ENCODE measurements at regions of chr15 and their contacts with region 1.

Region 1: DNA sequence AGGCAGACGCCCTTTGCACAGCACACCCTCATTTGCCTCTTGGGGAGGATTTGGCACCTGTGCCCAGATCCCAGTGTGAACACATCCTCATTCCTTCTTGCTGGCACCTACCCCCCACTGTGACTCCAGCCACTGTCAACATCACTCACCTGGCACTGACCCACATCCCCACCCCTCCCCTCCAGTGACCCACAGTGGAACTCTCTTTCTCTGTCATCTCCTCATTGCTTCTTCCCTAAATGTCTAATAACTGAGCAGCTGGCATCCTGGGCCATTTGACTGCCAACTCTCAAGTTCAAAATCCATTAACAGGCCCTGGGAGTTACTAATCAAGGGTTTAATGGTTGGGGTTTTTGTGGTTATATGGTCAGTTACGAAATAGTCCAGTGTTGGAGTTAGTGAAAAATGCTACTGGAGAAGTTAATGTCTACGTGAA is 14.4 kb downstream of the SNAPC5 start:
- DNase-seq: peak; percentile 89 to 94
- H3K4me3 ChIP-seq: no peak overlapping the region
- H3K27ac ChIP-seq: peak overlapping the region; percentile 72
- H3K4me1 ChIP-seq: peaks cover 47% of the 10 kb centered on the region
- H3K27me3 ChIP-seq: no peaks in the 10 kb centered on the region
- CTCF ChIP-seq: no peak

Region 2: DNA sequence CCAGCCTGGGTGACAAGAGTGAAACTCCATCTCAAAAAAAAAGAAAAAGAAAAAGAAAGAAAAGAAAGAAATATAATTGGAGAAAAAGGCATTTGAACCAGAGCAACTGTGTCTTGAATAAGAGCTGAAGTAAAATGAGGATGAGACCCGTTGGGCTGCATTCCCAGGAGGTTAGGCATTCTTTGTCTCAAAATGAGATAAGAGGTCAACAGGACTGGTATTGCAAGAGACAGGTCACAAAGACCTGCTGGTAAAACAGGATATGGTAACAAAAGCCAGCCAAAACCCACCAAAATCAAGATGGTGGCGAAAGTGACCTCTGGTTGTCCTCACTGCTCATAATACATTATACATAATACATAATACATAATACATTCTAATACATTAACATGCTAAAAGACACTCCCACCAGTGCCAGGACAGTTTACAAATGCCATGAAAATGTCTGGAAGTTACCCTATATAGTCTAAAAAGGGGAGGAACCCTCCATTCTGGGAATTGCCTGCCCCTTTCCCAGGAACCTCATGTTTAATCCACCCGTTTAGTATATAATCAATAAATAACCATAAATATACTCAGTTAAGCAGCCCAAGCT is 118.1 kb before region 1 on chr15:
- CTCF ChIA-PET with region 1: no interaction called
- POLR2A ChIA-PET with region 1: interaction called, 4 read pairs
- intact Hi-C with region 1: loop called (anchors 2 kb)
- DNase-seq: peak; percentile 57 to 71
- H3K4me3 ChIP-seq: no peak overlapping the region
- H3K27ac ChIP-seq: peak overlapping the region; percentile 61; the same call in 1 of the 2 replicates
- H3K4me1 ChIP-seq: peaks cover 29% of the 10 kb centered on the region
- H3K27me3 ChIP-seq: no peaks in the 10 kb centered on the region
- CTCF ChIP-seq: no peak

Region 3: DNA sequence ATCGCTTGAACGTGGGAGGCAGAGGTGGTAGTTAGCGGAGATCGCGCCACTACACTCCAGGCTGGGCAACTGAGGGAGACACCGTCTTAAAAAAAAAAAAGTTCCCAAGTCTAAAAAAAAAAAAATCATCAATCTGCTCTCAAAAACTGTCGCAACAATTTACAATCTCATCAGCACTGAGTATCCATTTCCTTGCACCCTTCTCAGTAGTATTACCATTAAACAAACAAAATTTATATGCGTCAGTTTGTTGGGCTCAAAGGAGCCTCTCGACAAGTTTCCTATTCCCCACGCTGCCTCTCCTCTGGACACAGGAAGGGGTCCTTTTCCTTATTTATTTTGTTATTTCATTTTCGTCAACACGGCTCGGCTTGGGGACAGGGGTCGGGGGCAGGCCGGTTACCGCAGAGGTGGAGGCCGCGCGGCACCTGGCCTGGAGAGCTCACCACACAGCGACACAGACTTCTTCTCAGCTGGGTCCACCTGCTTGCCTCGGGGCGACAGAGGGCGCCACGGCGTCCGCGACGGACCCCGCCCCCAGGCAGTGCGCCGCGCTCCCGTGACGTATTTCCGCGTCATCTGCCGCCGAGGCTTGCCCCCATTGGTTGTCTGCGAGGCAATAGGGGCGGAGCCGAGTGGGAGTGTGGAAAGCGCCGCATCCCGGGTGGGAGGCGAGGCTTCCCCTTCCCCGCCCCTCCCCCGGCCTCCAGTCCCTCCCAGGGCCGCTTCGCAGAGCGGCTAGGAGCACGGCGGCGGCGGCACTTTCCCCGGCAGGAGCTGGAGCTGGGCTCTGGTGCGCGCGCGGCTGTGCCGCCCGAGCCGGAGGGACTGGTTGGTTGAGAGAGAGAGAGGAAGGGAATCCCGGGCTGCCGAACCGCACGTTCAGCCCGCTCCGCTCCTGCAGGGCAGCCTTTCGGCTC is 96.7 kb before region 1 on chr15 and contains the start of gene MAP2K1:
- CTCF ChIA-PET with region 1: no interaction called
- POLR2A ChIA-PET with region 1: no interaction called
- intact Hi-C with region 1: loop called (anchors 1 kb)
- DNase-seq: peak; percentile 82 to 98
- H3K4me3 ChIP-seq: peak within 1 kb of the TSS; percentile 62
- H3K27ac ChIP-seq: peak within 1 kb of the TSS; percentile 55
- H3K4me1 ChIP-seq: peaks cover 19% of the 10 kb centered on the region
- H3K27me3 ChIP-seq: no peaks in the 10 kb centered on the region
- CTCF ChIP-seq: no peak; the same call in 1 of the 2 replicates
- total RNA-seq, gene MAP2K1: 78.6 and 95.5 TPM in 2 replicates

Region 4: GRCh38 chr15:66452971-66453580 is 30.1 kb before region 1 on chr15:
- CTCF ChIA-PET with region 1: interaction called, 19 read pairs
- POLR2A ChIA-PET with region 1: no interaction called
- intact Hi-C with region 1: no loop called
- DNase-seq: no peak
- H3K4me3 ChIP-seq: no peak overlapping the region
- H3K27ac ChIP-seq: no peak overlapping the region
- H3K4me1 ChIP-seq: peaks cover 34% of the 10 kb centered on the region
- H3K27me3 ChIP-seq: no peaks in the 10 kb centered on the region
- CTCF ChIP-seq: no peak

Region 5: GRCh38 chr15:66459818-66460615 is 23.1 kb before region 1 on chr15:
- CTCF ChIA-PET with region 1: no interaction called
- POLR2A ChIA-PET with region 1: interaction called, 5 read pairs
- intact Hi-C with region 1: loop called (anchors 1 kb)
- DNase-seq: peak; percentile 49 to 73
- H3K4me3 ChIP-seq: no peak overlapping the region
- H3K27ac ChIP-seq: peak overlapping the region; percentile 93
- H3K4me1 ChIP-seq: peaks cover 59% of the 10 kb centered on the region
- H3K27me3 ChIP-seq: no peaks in the 10 kb centered on the region
- CTCF ChIP-seq: no peak

Region 6: GRCh38 chr15:66472176-66472999 is 10.8 kb before region 1 on chr15:
- CTCF ChIA-PET with region 1: interaction called, 3 read pairs
- POLR2A ChIA-PET with region 1: no interaction called
- intact Hi-C with region 1: loop called (anchors 1 kb)
- DNase-seq: peak in 1 of 2 experiments; percentile 34
- H3K4me3 ChIP-seq: no peak overlapping the region
- H3K27ac ChIP-seq: no peak overlapping the region
- H3K4me1 ChIP-seq: no peaks in the 10 kb centered on the region; the same call in 1 of the 2 replicates
- H3K27me3 ChIP-seq: no peaks in the 10 kb centered on the region
- CTCF ChIP-seq: no peak

Region 7: GRCh38 chr15:67196672-67197363 is 713.7 kb after region 1 on chr15:
- CTCF ChIA-PET with region 1: no interaction called
- POLR2A ChIA-PET with region 1: no interaction called
- intact Hi-C with region 1: no loop called
- DNase-seq: no peak
- H3K4me3 ChIP-seq: no peak overlapping the region
- H3K27ac ChIP-seq: peak overlapping the region; percentile 10; the same call in 1 of the 2 replicates
- H3K4me1 ChIP-seq: peaks cover 7% of the 10 kb centered on the region; the same call in 1 of the 2 replicates
- H3K27me3 ChIP-seq: no peaks in the 10 kb centered on the region
- CTCF ChIP-seq: no peak

Measured in PC-9 (cell line).